Heart right ventricle (tissue), 16 donors: ENCODE measurements at regions of chr5 and their contacts with region 1.

Region 1: GRCh38 chr5:8349855-8350254 is 480.9 kb downstream of the MTRR start:
- DNase-seq: no peak
- ATAC-seq: no peak
- H3K4me3 ChIP-seq: no peak overlapping the region
- H3K27ac ChIP-seq: no peak overlapping the region
- H3K4me1 ChIP-seq: no peaks in the 10 kb centered on the region
- H3K27me3 ChIP-seq: no peaks in the 10 kb centered on the region
- CTCF ChIP-seq: no peak

Region 2: DNA sequence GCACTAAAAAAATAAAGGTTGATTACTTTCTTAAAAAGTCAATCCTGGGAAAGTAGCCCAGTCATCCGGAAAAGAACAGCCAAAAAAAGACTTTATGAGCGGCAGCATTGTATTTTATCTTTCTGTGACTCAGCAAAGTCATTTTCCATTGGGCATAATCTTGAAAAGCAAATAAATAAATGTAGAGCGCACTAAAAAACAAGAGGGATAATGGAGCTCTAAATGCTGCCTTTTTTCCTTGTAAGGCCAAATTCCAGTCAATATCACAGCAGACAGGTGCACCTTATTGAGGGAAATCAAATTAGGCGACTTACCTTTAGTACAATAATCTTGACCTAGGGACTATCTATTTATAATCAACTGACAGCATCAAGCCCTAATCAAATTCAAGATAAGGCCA is 214.1 kb before region 1 on chr5:
- intact Hi-C with region 1: no loop called
- DNase-seq: no peak
- ATAC-seq: no peak
- H3K4me3 ChIP-seq: no peak overlapping the region
- H3K27ac ChIP-seq: no peak overlapping the region
- H3K4me1 ChIP-seq: no peaks in the 10 kb centered on the region
- H3K27me3 ChIP-seq: no peaks in the 10 kb centered on the region
- CTCF ChIP-seq: no peak

Region 3: GRCh38 chr5:8288334-8288733 is 61.5 kb before region 1 on chr5:
- intact Hi-C with region 1: loop called in 1 of 10 experiments (anchors 2 kb)
- DNase-seq: no peak
- ATAC-seq: no peak
- H3K4me3 ChIP-seq: no peak overlapping the region
- H3K27ac ChIP-seq: no peak overlapping the region
- H3K4me1 ChIP-seq: no peaks in the 10 kb centered on the region
- H3K27me3 ChIP-seq: no peaks in the 10 kb centered on the region
- CTCF ChIP-seq: no peak